PC-9 (cell line): ENCODE measurements at regions of chr1 and their contacts with region 1.

Region 1: DNA sequence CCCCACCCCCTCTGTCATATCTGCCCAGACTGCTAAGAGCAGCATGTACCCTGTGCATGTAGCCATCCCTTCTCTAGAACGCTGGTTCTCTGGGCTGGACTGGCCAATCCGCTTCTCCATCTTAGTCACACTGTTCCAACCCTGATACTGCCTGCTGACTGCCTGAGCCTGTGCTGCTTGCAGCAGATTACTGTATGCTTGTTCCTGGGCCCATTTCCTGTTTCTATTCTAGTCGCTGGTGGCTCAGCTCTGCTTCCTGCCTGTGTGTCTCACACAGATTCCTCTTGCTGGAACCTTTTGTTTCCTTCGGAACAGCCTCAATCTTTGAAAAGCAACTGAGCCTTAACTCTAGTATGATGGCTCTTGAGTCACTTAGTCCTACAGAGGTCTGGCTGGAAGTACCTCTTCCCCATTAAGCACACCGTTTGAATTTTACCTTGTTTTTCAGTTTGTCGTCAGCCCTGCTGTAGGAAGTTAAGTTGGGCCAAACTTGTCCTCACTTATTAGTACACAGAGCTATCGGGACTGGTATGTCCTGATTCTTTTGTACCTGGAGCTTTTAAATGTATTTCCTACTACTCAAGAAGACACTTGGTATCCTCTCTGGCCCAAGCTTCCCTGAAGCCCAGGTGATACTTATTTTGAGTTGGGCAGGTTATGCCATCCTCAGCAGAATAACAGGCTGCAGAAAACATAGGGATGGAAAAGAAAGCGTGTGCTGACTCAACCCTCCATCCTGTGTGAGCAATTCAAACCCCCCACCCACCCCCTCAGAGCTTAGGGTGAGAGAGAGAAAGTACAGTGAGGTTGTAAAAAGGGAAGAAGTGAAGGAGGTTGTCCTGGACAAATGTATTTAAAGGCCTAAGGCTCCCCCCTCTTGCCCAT is 43.4 kb upstream of the PIGV start:
- DNase-seq: no peak
- H3K4me3 ChIP-seq: no peak overlapping the region
- H3K27ac ChIP-seq: no peak overlapping the region
- H3K4me1 ChIP-seq: no peaks in the 10 kb centered on the region
- H3K27me3 ChIP-seq: no peaks in the 10 kb centered on the region
- CTCF ChIP-seq: no peak

Region 2: GRCh38 chr1:26645734-26646133 is 98.6 kb before region 1 on chr1:
- CTCF ChIA-PET with region 1: interaction called, 10 read pairs
- POLR2A ChIA-PET with region 1: no interaction called
- intact Hi-C with region 1: no loop called
- DNase-seq: no peak
- H3K4me3 ChIP-seq: no peak overlapping the region
- H3K27ac ChIP-seq: no peak overlapping the region
- H3K4me1 ChIP-seq: no peaks in the 10 kb centered on the region
- H3K27me3 ChIP-seq: no peaks in the 10 kb centered on the region
- CTCF ChIP-seq: no peak